MCF 10A (cell line): ENCODE measurements at regions of chr10 and their contacts with region 1.

Region 1: DNA sequence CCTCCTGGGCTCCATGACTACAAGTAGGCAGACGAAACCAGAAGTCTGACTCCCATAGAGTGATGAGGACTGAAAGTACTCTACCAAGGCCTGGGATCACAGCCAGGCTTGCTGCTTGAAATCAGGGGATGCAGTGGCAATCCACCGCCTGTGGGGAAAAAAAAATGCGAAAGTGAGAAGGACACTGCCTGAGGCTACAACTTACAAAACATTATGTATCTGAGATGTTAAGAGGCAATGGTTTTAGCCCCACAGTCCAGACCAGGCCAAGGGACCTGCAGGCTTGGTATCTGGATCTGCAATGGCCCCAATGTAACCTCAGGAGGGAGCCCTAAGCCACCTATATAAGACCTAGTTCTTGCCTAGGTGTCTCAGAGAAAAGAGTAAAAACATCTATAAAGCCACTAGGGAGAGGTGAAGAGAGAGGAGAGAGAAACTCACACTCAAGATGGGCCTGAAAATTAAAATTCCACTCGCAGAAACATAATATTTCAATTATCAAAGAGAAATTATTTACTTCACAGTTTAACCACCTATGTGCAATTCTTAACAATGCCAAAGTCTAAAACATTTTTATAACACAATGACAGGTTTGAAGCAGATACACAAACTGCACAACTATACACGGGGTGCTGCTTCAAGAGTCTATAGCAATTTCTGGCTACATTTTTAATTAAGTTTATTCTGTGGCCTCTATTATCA is 13.9 kb downstream of the DNAJC1 start:
- DNase-seq: peak; percentile 74
- H3K4me3 Mint-ChIP-seq: peak overlapping the region; percentile 5
- H3K27ac Mint-ChIP-seq: peak overlapping the region; percentile 63
- H3K4me1 Mint-ChIP-seq: peaks cover 19% of the 10 kb centered on the region
- H3K27me3 Mint-ChIP-seq: no peaks in the 10 kb centered on the region
- CTCF ChIP-seq: peak; percentile 42

Region 2: GRCh38 chr10:21399392-21400035 is 590.1 kb before region 1 on chr10:
- CTCF ChIA-PET with region 1: no interaction called
- POLR2A ChIA-PET with region 1: no interaction called
- intact Hi-C with region 1: no loop called
- DNase-seq: peak; percentile 62
- H3K4me3 Mint-ChIP-seq: no peak overlapping the region
- H3K27ac Mint-ChIP-seq: no peak overlapping the region
- H3K4me1 Mint-ChIP-seq: peaks cover 30% of the 10 kb centered on the region
- H3K27me3 Mint-ChIP-seq: no peaks in the 10 kb centered on the region
- CTCF ChIP-seq: no peak

Region 3: DNA sequence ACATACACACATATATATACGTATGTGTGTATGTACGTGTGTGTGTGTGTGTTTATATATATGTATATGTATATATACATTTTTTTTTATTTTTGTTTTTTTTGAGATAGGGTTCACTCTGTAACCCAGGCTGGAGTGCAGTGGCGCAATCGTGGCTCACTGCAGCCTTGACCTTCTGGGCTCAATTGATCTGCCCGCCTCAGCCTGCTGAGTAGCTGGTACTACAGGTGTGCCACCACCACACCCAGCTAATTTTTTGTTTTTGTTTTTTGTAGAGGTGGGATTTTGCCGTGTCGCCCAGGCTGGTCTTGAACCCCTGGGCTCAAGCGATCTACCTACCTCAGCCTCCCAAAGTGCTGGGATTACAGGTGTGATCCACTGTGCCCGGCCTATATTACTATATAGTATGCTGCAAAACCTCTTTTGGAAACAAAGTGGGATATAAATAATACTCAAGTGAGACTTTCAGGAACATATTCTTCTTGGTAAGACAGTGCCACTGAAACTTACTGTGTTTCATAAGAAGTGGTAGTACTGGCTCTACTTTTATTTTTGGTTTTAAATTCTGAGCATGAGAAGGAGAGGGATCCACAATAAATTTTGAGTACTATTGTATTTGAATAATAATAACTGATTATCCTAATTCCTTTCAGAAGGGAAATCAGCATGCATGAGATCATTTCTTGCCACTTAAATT is 404.6 kb before region 1 on chr10:
- CTCF ChIA-PET with region 1: no interaction called
- POLR2A ChIA-PET with region 1: no interaction called
- intact Hi-C with region 1: no loop called
- DNase-seq: no peak
- H3K4me3 Mint-ChIP-seq: no peak overlapping the region
- H3K27ac Mint-ChIP-seq: no peak overlapping the region
- H3K4me1 Mint-ChIP-seq: peaks cover 20% of the 10 kb centered on the region
- H3K27me3 Mint-ChIP-seq: no peaks in the 10 kb centered on the region
- CTCF ChIP-seq: no peak

Region 4: DNA sequence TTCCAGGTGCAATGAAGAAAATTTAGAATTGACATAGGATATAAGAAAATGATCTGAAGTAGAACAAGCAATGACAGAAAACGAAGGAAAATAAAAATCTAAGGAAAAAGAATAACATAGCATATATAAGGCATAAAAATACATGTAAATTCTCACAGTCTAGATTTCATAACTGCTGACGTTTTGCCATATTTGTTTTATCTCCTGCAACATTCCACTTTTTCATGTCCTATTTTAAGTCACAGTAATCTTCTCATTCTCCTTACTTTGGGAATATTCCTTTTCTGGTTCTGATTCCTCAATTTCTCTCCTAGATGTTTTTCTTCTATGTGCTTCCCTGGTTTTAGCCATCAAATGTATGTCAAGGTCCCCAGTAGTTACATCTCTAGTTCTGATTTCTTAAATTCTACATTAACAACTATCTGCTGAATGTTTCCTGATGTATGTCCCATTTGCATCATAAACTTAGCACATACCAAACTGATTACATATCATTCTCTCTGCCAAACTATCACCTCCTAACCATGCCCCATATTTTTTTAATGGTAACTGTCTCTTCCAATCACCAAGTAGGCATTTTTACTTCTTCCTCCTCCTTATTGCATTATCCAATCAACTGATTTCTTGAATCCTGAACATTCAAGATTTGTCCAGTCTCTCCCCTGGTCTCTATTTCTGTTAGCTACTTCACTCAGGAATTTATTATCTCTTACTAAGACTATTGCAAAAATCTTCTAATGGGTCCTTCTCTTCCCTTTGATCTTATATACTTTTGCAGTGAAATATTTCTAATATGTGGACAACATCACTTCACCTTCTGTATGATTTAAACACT is 157.4 kb before region 1 on chr10:
- CTCF ChIA-PET with region 1: no interaction called
- POLR2A ChIA-PET with region 1: no interaction called
- intact Hi-C with region 1: no loop called
- DNase-seq: no peak
- H3K4me3 Mint-ChIP-seq: no peak overlapping the region
- H3K27ac Mint-ChIP-seq: peak overlapping the region; percentile 1
- H3K4me1 Mint-ChIP-seq: peaks cover 9% of the 10 kb centered on the region
- H3K27me3 Mint-ChIP-seq: no peaks in the 10 kb centered on the region
- CTCF ChIP-seq: no peak

Region 5: GRCh38 chr10:22010973-22011408 is 21.4 kb after region 1 on chr10:
- CTCF ChIA-PET with region 1: interaction called, 10 read pairs
- POLR2A ChIA-PET with region 1: no interaction called
- intact Hi-C with region 1: no loop called
- DNase-seq: peak; percentile 31
- H3K4me3 Mint-ChIP-seq: no peak overlapping the region
- H3K27ac Mint-ChIP-seq: no peak overlapping the region
- H3K4me1 Mint-ChIP-seq: no peaks in the 10 kb centered on the region
- H3K27me3 Mint-ChIP-seq: no peaks in the 10 kb centered on the region
- CTCF ChIP-seq: peak; percentile 25

Region 6: GRCh38 chr10:22071332-22071731 is 81.7 kb after region 1 on chr10:
- CTCF ChIA-PET with region 1: no interaction called
- POLR2A ChIA-PET with region 1: no interaction called
- intact Hi-C with region 1: no loop called
- DNase-seq: no peak
- H3K4me3 Mint-ChIP-seq: no peak overlapping the region
- H3K27ac Mint-ChIP-seq: no peak overlapping the region
- H3K4me1 Mint-ChIP-seq: no peaks in the 10 kb centered on the region
- H3K27me3 Mint-ChIP-seq: peaks cover 14% of the 10 kb centered on the region
- CTCF ChIP-seq: no peak

Region 7: GRCh38 chr10:22316285-22317120 is 326.9 kb after region 1 on chr10 and contains the start of gene COMMD3:
- CTCF ChIA-PET with region 1: interaction called, 4 read pairs
- POLR2A ChIA-PET with region 1: interaction called, 54 read pairs
- intact Hi-C with region 1: no loop called
- DNase-seq: peak; percentile 86
- H3K4me3 Mint-ChIP-seq: peak within 1 kb of the TSS; percentile 85
- H3K27ac Mint-ChIP-seq: peak within 1 kb of the TSS; percentile 84
- H3K4me1 Mint-ChIP-seq: peaks cover 16% of the 10 kb centered on the region
- H3K27me3 Mint-ChIP-seq: no peaks in the 10 kb centered on the region
- CTCF ChIP-seq: no peak
- total RNA-seq, gene COMMD3: 69.4 and 73.4 TPM in 2 replicates

Region 8: DNA sequence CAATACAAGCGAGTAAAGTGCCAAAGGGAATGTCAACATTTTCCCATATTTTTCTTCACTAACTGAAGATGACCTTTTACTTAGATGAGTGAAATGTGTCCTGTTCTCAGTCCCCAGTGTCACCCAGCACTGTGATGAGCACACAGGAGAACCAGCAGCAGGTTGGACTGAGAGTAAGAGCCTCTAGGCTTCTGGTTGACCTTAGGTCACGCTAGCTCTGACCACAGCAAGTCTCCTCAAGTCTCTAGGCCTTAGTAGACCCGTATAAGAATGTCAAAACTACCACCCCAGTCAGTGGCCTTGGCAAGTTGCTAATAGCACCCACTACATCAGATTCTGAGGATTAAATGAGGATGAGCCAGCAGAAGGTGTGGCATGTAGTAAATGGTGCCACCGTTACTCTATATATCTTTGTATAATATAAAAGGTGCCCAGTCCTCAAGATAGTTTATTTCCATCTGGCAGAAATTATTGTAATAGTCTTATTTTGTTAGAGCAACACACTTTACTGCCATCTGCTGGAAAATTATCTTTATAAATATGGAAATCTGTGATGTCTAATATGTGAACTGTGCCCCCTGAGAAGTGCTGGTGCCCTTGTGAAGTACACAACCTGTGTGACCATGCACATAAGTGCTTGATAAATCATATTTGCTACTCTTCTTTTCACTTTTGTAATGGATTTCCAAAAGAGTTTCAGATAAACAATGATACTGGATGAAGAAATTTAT is 431.3 kb after region 1 on chr10:
- CTCF ChIA-PET with region 1: interaction called, 10 read pairs
- POLR2A ChIA-PET with region 1: interaction called, 3 read pairs
- intact Hi-C with region 1: loop called (anchors 5 kb)
- DNase-seq: peak; percentile 27
- H3K4me3 Mint-ChIP-seq: no peak overlapping the region
- H3K27ac Mint-ChIP-seq: no peak overlapping the region
- H3K4me1 Mint-ChIP-seq: no peaks in the 10 kb centered on the region
- H3K27me3 Mint-ChIP-seq: no peaks in the 10 kb centered on the region
- CTCF ChIP-seq: no peak

Region 9: DNA sequence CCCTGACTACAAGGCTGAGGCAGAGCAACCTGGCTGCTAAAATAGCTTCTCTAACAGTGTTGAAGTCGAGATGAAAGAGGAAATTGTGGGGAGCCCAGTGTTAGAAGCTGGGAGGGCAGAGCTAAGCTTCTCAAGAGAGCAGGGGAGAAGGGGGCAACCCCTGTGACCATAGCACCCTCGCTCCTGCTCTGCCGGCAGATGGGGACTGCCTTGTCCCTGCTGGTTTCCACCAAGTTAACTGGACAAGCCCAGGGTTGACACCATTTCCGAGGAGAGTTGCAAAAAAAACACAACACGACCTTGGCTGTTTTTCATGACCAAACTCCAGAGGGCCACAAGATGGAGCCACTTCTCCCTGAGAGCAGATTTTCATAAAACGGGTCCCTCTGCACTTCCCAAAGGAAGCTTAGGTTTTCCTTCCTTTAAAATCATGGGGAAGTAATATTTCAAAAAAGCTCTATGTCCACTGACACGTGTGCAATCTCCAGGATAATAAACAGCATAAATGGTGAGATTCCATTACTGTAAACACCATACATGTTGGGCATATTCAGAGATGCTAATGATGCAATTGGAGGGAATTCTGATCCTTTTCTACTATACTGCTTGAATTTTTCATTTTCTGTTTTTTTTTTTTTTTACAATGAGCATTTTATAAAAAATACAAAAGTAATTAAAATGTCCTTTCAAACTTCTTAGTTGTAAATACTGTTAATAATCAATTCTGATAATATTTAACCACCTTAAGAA is 584.4 kb after region 1 on chr10:
- CTCF ChIA-PET with region 1: interaction called, 3 read pairs
- POLR2A ChIA-PET with region 1: no interaction called
- intact Hi-C with region 1: loop called (anchors 10 kb)
- DNase-seq: peak; percentile 25
- H3K4me3 Mint-ChIP-seq: no peak overlapping the region
- H3K27ac Mint-ChIP-seq: no peak overlapping the region
- H3K4me1 Mint-ChIP-seq: no peaks in the 10 kb centered on the region
- H3K27me3 Mint-ChIP-seq: no peaks in the 10 kb centered on the region
- CTCF ChIP-seq: peak; percentile 33

Region 10: DNA sequence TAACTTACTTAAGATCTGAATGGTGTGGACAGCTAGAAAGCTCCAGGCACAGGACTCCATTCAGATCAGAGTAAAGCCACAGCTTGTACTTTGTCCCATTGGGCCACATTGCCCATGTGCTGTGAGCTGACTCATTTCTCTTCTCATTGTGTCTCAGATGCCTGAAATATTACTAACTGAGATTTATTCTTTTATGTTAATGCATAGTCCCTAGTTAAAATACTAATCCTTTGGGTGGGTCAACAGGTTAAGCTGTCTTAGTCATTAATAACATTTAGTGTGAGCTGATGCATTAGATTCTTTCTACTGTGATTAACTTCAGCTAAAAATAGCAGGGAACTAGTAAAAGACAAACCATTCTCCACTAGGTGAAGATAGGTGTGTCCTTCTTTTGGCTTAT is 833.5 kb after region 1 on chr10:
- CTCF ChIA-PET with region 1: no interaction called
- POLR2A ChIA-PET with region 1: no interaction called
- intact Hi-C with region 1: loop called (anchors 5 kb)
- DNase-seq: peak; percentile 70
- H3K4me3 Mint-ChIP-seq: no peak overlapping the region
- H3K27ac Mint-ChIP-seq: peak overlapping the region; percentile 19
- H3K4me1 Mint-ChIP-seq: peaks cover 15% of the 10 kb centered on the region
- H3K27me3 Mint-ChIP-seq: no peaks in the 10 kb centered on the region
- CTCF ChIP-seq: no peak

Region 11: GRCh38 chr10:23067939-23068775 is 1078.6 kb after region 1 on chr10:
- CTCF ChIA-PET with region 1: interaction called, 6 read pairs
- POLR2A ChIA-PET with region 1: no interaction called
- intact Hi-C with region 1: loop called (anchors 5 kb)
- DNase-seq: peak; percentile 82
- H3K4me3 Mint-ChIP-seq: no peak overlapping the region
- H3K27ac Mint-ChIP-seq: no peak overlapping the region
- H3K4me1 Mint-ChIP-seq: peaks cover 12% of the 10 kb centered on the region
- H3K27me3 Mint-ChIP-seq: no peaks in the 10 kb centered on the region
- CTCF ChIP-seq: peak; percentile 58